Heart left ventricle (tissue), 16 donors: ENCODE measurements at regions of chr1 and their contacts with region 1.

Region 1: DNA sequence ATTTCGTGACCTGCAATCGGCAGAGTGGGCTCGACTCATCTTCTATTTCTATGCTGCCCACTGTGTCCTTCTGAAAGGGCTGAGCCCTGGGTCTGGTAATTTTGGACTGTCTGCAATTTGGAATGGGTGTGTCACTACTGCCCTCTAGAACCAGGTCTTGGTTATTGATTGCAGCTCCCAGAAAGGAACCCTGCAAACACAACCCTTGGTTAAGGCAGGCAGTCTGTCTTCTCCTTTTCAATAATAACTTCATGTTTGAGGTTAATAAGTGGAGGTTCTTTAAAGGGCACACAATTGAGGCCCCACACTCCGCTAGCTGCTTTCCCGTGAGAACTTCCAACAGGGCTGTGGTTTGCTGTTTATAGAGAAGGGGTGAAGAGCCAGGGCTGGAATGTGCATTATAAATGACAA is 79.9 kb upstream of the LYST start:
- DNase-seq: no peak
- ATAC-seq: peak in 3 of 4 donors; percentile 23 to 59 (median 55)
- H3K4me3 ChIP-seq: no peak overlapping the region
- H3K27ac ChIP-seq: peak overlapping the region in 1 of 12 donors; percentile 64
- H3K4me1 ChIP-seq: peaks cover 0 to 62% (median 0%) of the 10 kb centered on the region in 12 donors
- H3K27me3 ChIP-seq: no peaks in the 10 kb centered on the region
- CTCF ChIP-seq: peak in 7 of 12 donors; percentile 14 to 46 (median 22)
- POLR2A ChIP-seq: no peak

Region 2: DNA sequence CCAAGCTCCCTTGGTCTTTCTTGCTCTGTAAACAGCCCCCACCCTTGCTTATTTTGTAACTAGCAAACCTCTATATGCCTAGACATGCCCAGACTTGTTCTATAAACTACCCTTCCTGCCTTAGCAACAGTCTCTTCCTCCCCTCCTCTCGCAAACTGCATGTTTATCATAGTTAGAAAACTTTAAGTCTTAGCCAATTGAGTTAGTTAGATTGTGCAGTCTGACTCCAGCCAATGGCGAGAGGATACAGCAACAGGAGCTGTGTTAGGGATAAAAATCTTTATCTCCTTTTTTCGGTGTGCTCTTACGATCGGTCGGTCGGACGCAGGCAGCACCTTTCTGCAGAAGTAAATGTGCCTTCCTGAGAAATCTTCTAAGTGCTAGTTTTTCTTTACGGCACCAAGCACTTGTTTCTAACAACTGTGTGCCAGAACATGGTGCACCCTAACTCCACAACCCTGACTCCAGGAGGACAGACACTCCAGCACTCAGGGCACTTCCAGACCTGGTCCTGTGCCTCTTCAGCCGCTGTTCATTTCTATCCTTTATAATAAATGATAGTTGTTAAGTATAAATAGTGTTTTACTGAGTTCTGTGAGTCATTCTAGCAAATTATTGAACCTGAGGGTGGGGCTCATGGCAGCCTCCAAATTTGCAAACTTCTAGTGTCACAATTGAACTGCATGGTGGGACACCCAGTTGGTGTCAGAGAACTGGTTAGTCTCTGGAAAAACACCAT is 271.3 kb before region 1 on chr1:
- intact Hi-C with region 1: no loop called
- DNase-seq: no peak
- ATAC-seq: no peak
- H3K4me3 ChIP-seq: no peak overlapping the region
- H3K27ac ChIP-seq: no peak overlapping the region
- H3K4me1 ChIP-seq: no peaks in the 10 kb centered on the region
- H3K27me3 ChIP-seq: no peaks in the 10 kb centered on the region
- CTCF ChIP-seq: no peak
- POLR2A ChIP-seq: no peak

Region 3: DNA sequence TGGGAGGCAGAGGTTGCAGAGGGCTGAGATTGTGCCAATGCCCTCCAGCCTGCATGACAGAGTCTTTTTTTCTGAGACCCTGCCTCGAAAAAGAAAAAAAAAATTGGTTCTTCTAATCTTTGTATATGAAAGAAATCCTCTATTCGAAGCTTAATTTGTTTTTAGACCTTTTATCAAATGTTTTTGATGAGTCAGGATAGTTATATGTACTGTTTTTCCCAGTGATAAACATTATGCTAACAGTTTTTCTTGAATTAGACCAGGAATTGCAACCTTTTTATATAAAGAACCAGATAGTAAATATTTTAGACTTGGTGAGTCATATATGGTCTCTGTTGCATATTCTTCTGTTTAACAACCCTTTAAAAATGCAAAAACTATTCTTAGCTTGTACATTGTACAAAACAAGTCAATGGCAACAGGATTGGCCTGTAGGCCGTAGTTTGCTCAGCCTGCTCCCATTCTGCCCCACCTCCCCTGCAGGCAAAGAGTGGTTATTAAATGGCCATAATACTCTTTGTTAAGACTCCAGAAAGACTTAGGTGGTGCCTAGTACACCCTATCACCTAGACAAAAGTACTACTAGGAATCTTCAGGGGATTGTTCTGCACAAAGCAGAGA is 125.1 kb before region 1 on chr1:
- intact Hi-C with region 1: no loop called
- DNase-seq: no peak
- ATAC-seq: no peak
- H3K4me3 ChIP-seq: no peak overlapping the region
- H3K27ac ChIP-seq: no peak overlapping the region
- H3K4me1 ChIP-seq: no peaks in the 10 kb centered on the region
- H3K27me3 ChIP-seq: no peaks in the 10 kb centered on the region
- CTCF ChIP-seq: no peak
- POLR2A ChIP-seq: no peak

Region 4: GRCh38 chr1:235883261-235883927 is 63.2 kb before region 1 on chr1:
- intact Hi-C with region 1: loop called in 1 of 10 experiments (anchors 10 kb)
- DNase-seq: peak; percentile 85 to 91 (median 88)
- ATAC-seq: peak; percentile 67 to 92 (median 86)
- H3K4me3 ChIP-seq: peak overlapping the region in 10 of 12 donors; percentile 7 to 36 (median 22)
- H3K27ac ChIP-seq: peak overlapping the region in 11 of 12 donors; percentile 10 to 68 (median 51)
- H3K4me1 ChIP-seq: peaks cover 0 to 54% (median 12%) of the 10 kb centered on the region in 12 donors
- H3K27me3 ChIP-seq: no peaks in the 10 kb centered on the region
- CTCF ChIP-seq: no peak
- POLR2A ChIP-seq: no peak

Region 5: DNA sequence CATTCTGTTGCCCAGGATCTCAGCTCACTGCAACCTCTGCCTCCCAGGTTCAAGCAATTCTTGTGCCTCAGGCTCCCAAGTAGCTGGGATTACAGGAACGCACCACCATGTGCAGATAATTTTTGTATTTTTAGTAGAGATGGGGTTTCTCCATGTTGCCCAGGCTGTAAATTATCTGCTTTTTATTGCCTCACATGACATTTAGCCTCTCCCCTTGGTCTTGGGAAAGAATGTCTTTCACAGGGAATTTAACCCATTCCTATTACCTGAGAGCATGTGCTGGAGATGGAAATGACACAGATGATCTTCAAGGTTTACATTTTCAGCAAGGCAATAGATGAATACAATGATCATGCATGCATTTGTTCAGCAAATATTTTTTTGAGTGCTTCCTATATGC is 42.5 kb after region 1 on chr1:
- intact Hi-C with region 1: no loop called
- DNase-seq: no peak
- ATAC-seq: no peak
- H3K4me3 ChIP-seq: no peak overlapping the region
- H3K27ac ChIP-seq: no peak overlapping the region
- H3K4me1 ChIP-seq: peaks cover 0 to 32% (median 12%) of the 10 kb centered on the region in 12 donors
- H3K27me3 ChIP-seq: no peaks in the 10 kb centered on the region
- CTCF ChIP-seq: no peak
- POLR2A ChIP-seq: no peak

Region 6: DNA sequence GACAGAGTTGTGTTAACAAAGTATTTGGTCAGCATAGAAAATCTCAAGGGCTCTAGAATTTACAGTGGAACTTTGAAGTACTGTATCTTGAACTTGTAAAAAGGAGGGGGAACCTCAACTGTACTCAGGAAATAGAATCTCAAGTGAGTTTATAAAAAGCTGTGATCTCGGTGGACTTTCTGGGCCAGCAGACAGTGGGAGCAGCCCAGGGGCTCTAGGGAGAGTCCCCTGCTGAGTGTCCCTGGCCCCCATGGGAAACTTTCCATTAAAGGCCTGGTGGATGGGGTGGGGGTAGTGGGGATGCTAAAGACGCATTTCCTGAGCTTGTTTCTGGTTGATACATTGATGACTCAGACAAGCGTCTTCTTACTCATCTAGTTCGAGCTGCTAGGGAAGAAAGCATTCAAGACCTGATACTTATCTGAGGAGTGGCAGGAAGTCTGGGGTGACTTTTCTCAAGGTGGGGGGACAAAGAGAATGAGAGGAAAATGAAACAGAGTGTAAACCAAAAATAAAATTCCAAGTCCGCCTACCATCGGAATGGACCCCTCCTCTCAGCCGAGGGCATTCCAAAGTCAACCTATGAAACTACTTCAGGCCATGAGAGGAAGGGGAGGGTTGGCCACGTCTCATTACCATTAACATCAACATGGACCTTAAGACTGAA is 52.8 kb after region 1 on chr1:
- intact Hi-C with region 1: no loop called
- DNase-seq: peak in 4 of 5 donors; percentile 49 to 68 (median 56)
- ATAC-seq: peak; percentile 19 to 79 (median 57)
- H3K4me3 ChIP-seq: no peak overlapping the region
- H3K27ac ChIP-seq: peak overlapping the region; percentile 32 to 85 (median 66)
- H3K4me1 ChIP-seq: peaks cover 0 to 38% (median 18%) of the 10 kb centered on the region in 12 donors
- H3K27me3 ChIP-seq: no peaks in the 10 kb centered on the region
- CTCF ChIP-seq: no peak
- POLR2A ChIP-seq: no peak